ENCODE measurements at regions of chr1 and their contacts with region 1.

Region 1: GRCh38 chr1:223001653-223002634 is 141.1 kb downstream of the TLR5 start:
- DNase-seq: no peak
- ATAC-seq: no peak
- H3K4me3 Mint-ChIP-seq: no peak overlapping the region
- H3K27ac Mint-ChIP-seq: no peak overlapping the region
- H3K4me1 Mint-ChIP-seq: no peaks in the 10 kb centered on the region
- H3K27me3 Mint-ChIP-seq: no peaks in the 10 kb centered on the region
- CTCF ChIP-seq: no peak

Region 2: DNA sequence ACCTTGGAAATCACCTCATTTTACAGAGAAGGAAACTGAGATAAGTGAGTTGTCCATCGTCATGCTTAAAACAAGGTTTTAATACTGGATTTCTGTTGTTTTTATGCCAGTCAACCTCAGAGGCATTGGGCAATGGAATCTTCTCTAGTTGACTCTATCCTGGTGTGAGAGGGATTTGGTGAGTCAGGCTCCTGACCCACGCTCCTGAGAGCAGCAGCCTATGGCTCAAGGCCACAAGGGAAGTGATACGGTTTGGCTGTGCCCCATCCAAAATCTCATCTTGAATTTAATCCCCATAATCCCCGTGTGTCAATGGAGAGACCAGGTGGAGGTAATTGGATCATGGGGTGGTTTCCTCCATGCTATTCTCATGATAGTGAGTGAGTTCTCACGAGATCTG is 51.0 kb after region 1 on chr1:
- CTCF ChIA-PET with region 1: no interaction called
- POLR2A ChIA-PET with region 1: no interaction called
- intact Hi-C with region 1: loop called (anchors 5 kb)
- DNase-seq: no peak
- ATAC-seq: no peak
- H3K4me3 Mint-ChIP-seq: no peak overlapping the region
- H3K27ac Mint-ChIP-seq: no peak overlapping the region
- H3K4me1 Mint-ChIP-seq: no peaks in the 10 kb centered on the region
- H3K27me3 Mint-ChIP-seq: peaks cover 1% of the 10 kb centered on the region
- CTCF ChIP-seq: no peak

Region 3: GRCh38 chr1:223207293-223208066 is 205.5 kb after region 1 on chr1:
- CTCF ChIA-PET with region 1: no interaction called
- POLR2A ChIA-PET with region 1: no interaction called
- intact Hi-C with region 1: no loop called
- DNase-seq: no peak
- ATAC-seq: no peak
- H3K4me3 Mint-ChIP-seq: no peak overlapping the region
- H3K27ac Mint-ChIP-seq: no peak overlapping the region
- H3K4me1 Mint-ChIP-seq: no peaks in the 10 kb centered on the region
- H3K27me3 Mint-ChIP-seq: no peaks in the 10 kb centered on the region
- CTCF ChIP-seq: no peak

Measured in activated CD8-positive, alpha-beta T cell treated with anti-CD3 and anti-CD28 coated beads for 36 hours (primary cell).